ENCODE measurements at regions of chr18 and their contacts with region 1.

Region 1: GRCh38 chr18:79988451-79989194 is at the start of gene TXNL4A:
- DNase-seq: peak; percentile 54
- ATAC-seq: peak; percentile 97
- H3K4me3 ChIP-seq: peak within 1 kb of the TSS; percentile 72
- H3K27ac ChIP-seq: peak within 1 kb of the TSS; percentile 85
- H3K4me1 ChIP-seq: no peaks in the 10 kb centered on the region
- H3K27me3 ChIP-seq: no peaks in the 10 kb centered on the region
- CTCF ChIP-seq: no peak
- EP300 ChIP-seq: no peak
- POLR2A ChIP-seq: peak; percentile 94
- RAD21 ChIP-seq: no peak
- polyA plus RNA-seq, gene TXNL4A: 38.4 to 132 TPM

Region 2: DNA sequence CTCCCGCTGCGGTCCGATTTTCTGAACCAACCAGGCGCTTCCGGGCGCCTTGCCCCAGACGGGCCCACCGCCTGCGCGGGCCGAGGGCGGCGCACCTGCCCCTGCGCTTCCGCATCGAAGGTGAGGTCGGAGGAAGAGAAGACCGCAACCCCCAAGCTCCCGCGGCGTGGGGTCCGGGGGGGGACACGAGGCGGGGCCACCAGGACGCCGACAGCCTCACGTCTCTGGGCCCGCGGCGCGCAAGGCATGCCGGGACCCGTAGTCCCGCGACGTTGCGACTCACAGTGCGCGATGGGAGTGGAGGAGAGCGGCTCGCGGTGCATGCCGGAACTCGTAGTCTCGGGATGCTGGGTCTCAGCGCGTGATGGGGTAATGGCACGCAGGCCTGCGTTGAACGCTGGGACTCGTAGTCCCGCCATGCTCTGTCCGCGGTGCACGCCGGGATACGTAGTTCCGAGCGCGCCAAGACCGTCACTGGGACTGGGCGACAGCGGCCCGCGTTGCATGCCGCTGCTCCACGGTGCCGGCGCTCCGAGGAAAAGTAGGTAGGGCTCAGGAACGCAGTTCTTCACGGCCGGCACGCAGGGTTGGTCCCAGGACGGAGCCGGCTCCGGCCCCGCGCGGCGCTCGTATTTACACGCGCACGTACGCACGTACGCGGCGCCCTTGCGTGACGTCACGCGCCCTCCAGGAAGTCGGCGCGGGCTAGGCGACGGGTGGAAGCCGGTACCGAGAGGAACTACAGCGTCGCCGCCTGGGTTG is 309.3 kb before region 1 on chr18 and contains the start of gene CTDP1:
- CTCF ChIA-PET with region 1: no interaction called
- POLR2A ChIA-PET with region 1: no interaction called
- RAD21 ChIA-PET with region 1: no interaction called
- SMC1A ChIA-PET with region 1: no interaction called
- in situ Hi-C with region 1: no loop called
- intact Hi-C with region 1: loop called (anchors 5 kb)
- DNase-seq: peak; percentile 98
- ATAC-seq: peak; percentile 95
- H3K4me3 ChIP-seq: peak within 1 kb of the TSS; percentile 71
- H3K27ac ChIP-seq: peak within 1 kb of the TSS; percentile 98
- H3K4me1 ChIP-seq: peaks cover 31% of the 10 kb centered on the region
- H3K27me3 ChIP-seq: no peaks in the 10 kb centered on the region
- CTCF ChIP-seq: no peak
- EP300 ChIP-seq: peak in 1 of 2 experiments; percentile 25; a peak in 1 of 4 replicates
- POLR2A ChIP-seq: peak; percentile 89
- RAD21 ChIP-seq: no peak
- polyA plus RNA-seq, gene CTDP1: 0.32 to 1.6 TPM

Region 3: DNA sequence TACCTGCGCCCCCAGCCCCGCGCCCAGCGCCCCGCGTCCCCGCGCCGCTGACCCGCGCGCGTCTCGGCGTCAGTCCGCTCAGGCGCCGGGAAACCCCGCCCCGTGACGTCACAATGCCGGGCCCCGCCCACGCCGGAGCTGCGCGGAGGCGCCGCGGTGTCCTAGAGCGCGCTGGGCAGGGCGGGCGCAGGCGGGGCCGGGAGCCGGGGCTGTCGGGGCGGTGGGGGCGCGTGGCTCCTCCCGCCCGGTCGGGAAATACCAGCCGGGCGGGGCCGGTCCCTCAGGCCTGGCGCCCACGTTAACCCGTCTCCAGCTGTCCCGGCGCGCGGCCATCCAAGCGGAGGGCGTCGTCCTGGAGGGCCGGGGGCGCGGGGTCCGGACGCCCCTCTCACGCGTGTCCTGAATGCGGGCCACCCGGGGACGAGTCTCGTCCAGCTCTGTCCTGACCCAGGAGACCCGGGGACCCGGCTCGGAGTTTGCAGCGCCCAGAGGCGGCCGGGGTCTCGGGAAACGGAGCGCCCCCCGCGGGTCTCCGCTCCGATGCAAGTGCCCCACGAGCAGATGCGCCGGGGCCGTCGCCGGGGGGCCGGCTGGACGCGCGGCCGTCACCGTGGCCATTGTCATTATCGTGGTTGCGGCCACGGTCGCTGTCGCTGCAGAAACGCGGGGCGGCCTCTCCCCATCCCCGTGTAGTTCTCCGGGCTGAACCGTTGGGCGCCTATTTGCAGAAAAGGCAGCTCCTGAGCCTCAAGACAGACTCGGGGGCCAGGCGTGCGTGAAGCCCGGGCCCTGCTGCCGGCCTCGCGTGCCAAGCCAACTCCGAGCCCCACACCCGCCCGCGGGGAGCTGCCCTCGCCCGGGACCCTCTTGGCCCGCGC is 36.8 kb before region 1 on chr18 and contains the start of gene SLC66A2:
- CTCF ChIA-PET with region 1: interaction called, 5 read pairs
- POLR2A ChIA-PET with region 1: no interaction called
- RAD21 ChIA-PET with region 1: interaction called, 4 read pairs
- SMC1A ChIA-PET with region 1: interaction called, 5 read pairs
- in situ Hi-C with region 1: no loop called
- intact Hi-C with region 1: loop called (anchors 5 kb)
- DNase-seq: no peak
- ATAC-seq: peak; percentile 87
- H3K4me3 ChIP-seq: peak within 1 kb of the TSS; percentile 84
- H3K27ac ChIP-seq: peak within 1 kb of the TSS; percentile 75
- H3K4me1 ChIP-seq: peaks cover 14% of the 10 kb centered on the region
- H3K27me3 ChIP-seq: no peaks in the 10 kb centered on the region
- CTCF ChIP-seq: no peak
- EP300 ChIP-seq: no peak
- POLR2A ChIP-seq: peak; percentile 65; the same call in 1 of the 2 replicates
- RAD21 ChIP-seq: no peak
- polyA plus RNA-seq, gene SLC66A2: 0.69 to 2.7 TPM

Region 4: DNA sequence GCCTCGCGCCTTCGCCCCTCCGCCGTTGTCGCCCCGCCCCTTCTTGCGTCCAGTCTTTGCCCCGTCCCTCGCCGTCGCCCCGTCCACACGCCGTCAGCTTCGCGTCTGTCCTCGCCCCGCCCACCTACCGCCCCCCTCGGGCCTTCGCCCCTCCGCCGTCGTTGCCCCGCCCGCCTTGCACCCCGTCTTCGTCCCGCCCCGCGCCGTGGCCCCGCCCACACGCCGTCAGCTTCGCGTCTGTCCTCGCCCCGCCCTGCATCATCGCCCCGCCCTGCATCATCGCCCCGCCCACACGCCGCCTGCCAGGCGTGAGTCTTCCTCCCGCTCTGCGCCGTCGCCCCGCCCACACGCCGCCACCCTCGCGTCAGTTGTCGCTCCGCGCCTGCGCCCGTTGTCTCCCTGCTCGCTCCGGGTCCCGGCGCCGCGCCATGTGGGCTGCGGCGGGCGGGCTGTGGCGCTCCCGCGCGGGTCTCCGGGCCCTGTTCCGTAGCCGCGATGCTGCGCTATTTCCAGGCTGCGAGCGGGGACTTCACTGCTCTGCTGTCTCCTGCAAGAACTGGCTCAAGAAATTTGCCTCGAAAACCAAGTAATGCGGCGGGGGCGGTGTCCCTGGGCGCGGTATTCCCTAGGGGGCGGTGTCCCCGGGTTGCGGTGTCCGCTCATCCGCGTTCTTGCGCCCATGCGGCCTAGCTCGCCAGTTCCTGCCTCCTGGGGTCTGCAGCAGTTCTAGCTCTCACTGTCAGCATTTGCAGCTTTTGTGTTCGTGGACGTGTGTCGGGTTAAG is 45.6 kb after region 1 on chr18 and contains the start of gene RBFA:
- CTCF ChIA-PET with region 1: interaction called, 5 read pairs
- POLR2A ChIA-PET with region 1: interaction called, 6 read pairs
- RAD21 ChIA-PET with region 1: interaction called, 9 read pairs
- SMC1A ChIA-PET with region 1: interaction called, 3 read pairs
- in situ Hi-C with region 1: no loop called
- intact Hi-C with region 1: loop called (anchors 5 kb)
- DNase-seq: peak; percentile 94
- ATAC-seq: peak; percentile 88
- H3K4me3 ChIP-seq: peak within 1 kb of the TSS; percentile 79
- H3K27ac ChIP-seq: peak within 1 kb of the TSS; percentile 64
- H3K4me1 ChIP-seq: peaks cover 3% of the 10 kb centered on the region; the same call in 1 of the 2 replicates
- H3K27me3 ChIP-seq: no peaks in the 10 kb centered on the region
- CTCF ChIP-seq: peak in 2 of 3 experiments; percentile 11 to 23; a peak in 2 of 6 replicates
- EP300 ChIP-seq: 0 out of 4 replicates have a peak, but pooled peaks of 1 of the 2 experiments have one; percentile 18
- POLR2A ChIP-seq: peak; percentile 85
- RAD21 ChIP-seq: no peak
- polyA plus RNA-seq, gene RBFA: 7.2 to 9.1 TPM

Region 5: DNA sequence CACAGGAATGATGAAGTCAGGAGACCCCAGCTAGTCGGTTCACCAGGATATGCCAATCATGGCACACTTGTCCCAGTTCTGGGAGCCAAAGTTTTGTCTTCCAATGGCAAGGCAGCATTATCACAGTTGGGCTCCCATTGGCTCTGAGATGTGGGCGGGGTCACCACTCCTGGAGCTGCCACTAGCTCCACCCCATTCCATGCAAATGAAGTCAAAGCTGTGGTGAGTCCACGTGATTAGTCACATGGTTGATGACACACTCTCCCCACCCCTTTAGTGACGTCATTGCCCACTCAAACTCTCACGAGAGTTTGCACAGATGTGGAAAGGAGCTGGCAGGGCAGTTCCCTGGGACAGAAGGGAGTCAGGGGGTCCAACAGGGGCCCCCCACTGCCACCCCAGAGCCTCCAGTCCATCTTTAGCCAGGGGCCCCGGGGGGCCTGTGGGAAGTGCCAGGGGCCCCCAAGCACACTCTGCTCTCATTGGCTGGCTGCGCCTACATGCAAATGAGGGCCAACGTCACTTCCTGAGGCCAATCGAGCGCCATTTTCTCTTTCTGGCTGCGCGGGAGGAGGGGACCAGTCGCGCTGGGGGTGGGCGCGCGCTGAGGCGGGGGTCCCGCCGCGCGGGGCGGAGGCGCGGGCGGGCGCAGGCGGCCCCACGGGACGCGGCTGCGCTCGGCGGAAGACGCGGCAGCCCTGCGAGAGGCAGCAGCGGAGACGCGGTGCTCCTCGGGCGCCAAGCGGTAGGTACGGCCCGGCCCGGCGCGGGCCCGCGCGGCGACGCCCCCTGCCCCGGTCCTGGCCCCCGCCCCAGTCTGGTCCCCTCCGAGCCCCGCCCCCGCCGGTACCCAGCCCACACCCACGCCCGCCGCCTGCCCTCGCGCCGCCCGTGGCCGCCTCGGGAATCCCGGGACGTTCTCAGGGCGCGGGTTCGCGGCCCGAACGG is 120.4 kb after region 1 on chr18 and contains the start of gene ADNP2:
- CTCF ChIA-PET with region 1: no interaction called
- POLR2A ChIA-PET with region 1: interaction called, 3 read pairs
- RAD21 ChIA-PET with region 1: no interaction called
- SMC1A ChIA-PET with region 1: interaction called, 3 read pairs
- in situ Hi-C with region 1: no loop called
- intact Hi-C with region 1: loop called (anchors 2 kb)
- DNase-seq: peak; percentile 75
- ATAC-seq: peak; percentile 78
- H3K4me3 ChIP-seq: peak within 1 kb of the TSS; percentile 83
- H3K27ac ChIP-seq: peak within 1 kb of the TSS; percentile 66
- H3K4me1 ChIP-seq: peaks cover 19% of the 10 kb centered on the region
- H3K27me3 ChIP-seq: no peaks in the 10 kb centered on the region
- CTCF ChIP-seq: no peak
- EP300 ChIP-seq: no peak
- POLR2A ChIP-seq: peak; percentile 89
- RAD21 ChIP-seq: no peak
- polyA plus RNA-seq, gene ADNP2: 6.9 to 13.1 TPM

Measured in GM12878 (cell line).